ENCODE measurements at regions of chr1 and their contacts with region 1.

Region 1: GRCh38 chr1:18100491-18101063 is 7.0 kb upstream of the IGSF21 start:
- DNase-seq: peak; percentile 84
- H3K4me3 ChIP-seq: no peak overlapping the region
- H3K27ac ChIP-seq: no peak overlapping the region
- H3K4me1 ChIP-seq: no peaks in the 10 kb centered on the region
- H3K27me3 ChIP-seq: no peaks in the 10 kb centered on the region
- CTCF ChIP-seq: peak; percentile 67

Region 2: DNA sequence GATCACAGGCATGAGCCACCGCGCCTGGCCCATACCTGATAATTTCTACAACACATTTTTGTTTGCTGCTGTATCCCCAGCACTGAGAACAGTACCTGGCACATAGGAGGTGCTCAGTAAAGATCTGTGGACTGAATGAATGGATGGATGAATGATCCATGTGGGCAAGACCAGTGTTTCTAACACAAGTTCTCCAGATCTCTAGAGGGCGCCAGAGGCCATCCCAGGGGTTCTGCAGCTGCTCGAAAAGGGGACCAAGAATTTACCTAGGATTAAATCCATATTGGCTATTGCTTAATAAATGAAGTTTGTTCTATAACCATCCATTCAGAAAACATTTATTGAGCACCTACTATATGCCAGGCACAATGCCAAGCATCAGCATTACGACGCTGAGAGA is 177.7 kb before region 1 on chr1:
- intact Hi-C with region 1: loop called (anchors 5 kb)
- DNase-seq: peak; percentile 58
- H3K4me3 ChIP-seq: no peak overlapping the region
- H3K27ac ChIP-seq: no peak overlapping the region
- H3K4me1 ChIP-seq: no peaks in the 10 kb centered on the region
- H3K27me3 ChIP-seq: no peaks in the 10 kb centered on the region
- CTCF ChIP-seq: peak; percentile 45

Region 3: GRCh38 chr1:17984583-17984982 is 116.0 kb before region 1 on chr1:
- intact Hi-C with region 1: loop called (anchors 5 kb)
- DNase-seq: peak; percentile 49
- H3K4me3 ChIP-seq: no peak overlapping the region
- H3K27ac ChIP-seq: no peak overlapping the region
- H3K4me1 ChIP-seq: no peaks in the 10 kb centered on the region
- H3K27me3 ChIP-seq: no peaks in the 10 kb centered on the region
- CTCF ChIP-seq: peak; percentile 54

Region 4: DNA sequence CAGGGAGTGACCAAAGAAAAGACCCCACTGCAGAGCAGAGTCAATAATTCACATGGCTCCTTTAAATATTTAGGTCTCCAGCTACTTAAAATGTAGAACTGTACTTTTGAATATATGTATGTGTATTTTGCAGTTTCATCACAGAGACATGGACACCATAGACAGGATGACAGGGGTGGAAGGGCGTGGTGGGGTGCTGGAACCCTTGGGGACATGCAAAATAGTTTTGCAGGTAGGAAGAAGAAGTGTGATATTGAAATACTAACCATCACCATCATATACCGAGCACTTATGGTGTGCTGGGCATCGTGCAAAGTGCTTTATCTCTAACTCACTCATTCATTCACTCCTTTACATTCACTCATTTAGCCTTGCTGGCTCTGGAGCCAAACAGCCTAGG is 65.4 kb before region 1 on chr1:
- intact Hi-C with region 1: no loop called
- DNase-seq: no peak
- H3K4me3 ChIP-seq: no peak overlapping the region
- H3K27ac ChIP-seq: no peak overlapping the region
- H3K4me1 ChIP-seq: no peaks in the 10 kb centered on the region
- H3K27me3 ChIP-seq: no peaks in the 10 kb centered on the region
- CTCF ChIP-seq: no peak

Region 5: GRCh38 chr1:18047122-18047521 is 53.5 kb before region 1 on chr1:
- intact Hi-C with region 1: no loop called
- DNase-seq: no peak
- H3K4me3 ChIP-seq: no peak overlapping the region
- H3K27ac ChIP-seq: no peak overlapping the region
- H3K4me1 ChIP-seq: no peaks in the 10 kb centered on the region
- H3K27me3 ChIP-seq: no peaks in the 10 kb centered on the region
- CTCF ChIP-seq: no peak

Region 6: GRCh38 chr1:18072066-18072465 is 28.5 kb before region 1 on chr1:
- intact Hi-C with region 1: no loop called
- DNase-seq: no peak
- H3K4me3 ChIP-seq: no peak overlapping the region
- H3K27ac ChIP-seq: no peak overlapping the region
- H3K4me1 ChIP-seq: no peaks in the 10 kb centered on the region
- H3K27me3 ChIP-seq: no peaks in the 10 kb centered on the region
- CTCF ChIP-seq: no peak